Heart right ventricle (tissue), 16 donors: ENCODE measurements at regions of chr5 and their contacts with region 1.

Region 1: DNA sequence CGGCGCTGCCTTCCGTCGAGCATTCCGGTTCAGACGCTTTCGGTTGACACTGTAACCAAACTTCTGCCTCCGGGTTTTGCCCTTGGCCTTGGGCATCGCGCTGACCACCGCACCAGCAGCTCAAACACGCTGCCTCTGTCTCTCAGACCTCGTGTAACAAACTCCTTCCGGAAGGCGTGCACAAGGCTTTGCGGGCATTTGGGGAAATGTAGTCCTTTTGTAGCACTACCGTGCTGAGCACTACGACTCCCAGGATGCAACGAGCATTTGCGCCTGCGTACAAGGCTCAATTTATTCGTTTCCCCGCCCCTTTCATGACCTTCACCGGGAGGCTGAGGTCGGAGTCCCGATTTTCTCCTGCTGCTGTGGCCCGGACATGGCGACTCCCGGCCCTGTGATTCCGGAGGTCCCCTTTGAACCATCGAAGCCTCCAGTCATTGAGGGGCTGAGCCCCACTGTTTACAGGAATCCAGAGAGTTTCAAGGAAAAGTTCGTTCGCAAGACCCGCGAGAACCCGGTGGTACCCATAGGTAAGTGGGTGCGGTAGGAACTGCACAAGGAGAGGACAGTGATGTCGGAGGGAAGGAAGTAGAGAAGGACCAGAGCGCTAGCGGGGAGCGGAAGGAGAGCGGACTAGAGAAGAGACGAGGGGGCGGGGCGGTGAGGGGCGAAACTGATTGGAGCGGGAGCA is at the starts of genes HIGD2A and NOP16:
- DNase-seq: peak; percentile 99 to 100
- ATAC-seq: peak; percentile 94 to 98 (median 96)
- H3K4me3 ChIP-seq: peak within 1 kb of the TSS; percentile 52 to 99 (median 78)
- H3K27ac ChIP-seq: peak within 1 kb of the TSS; percentile 91 to 99 (median 95)
- H3K4me1 ChIP-seq: peaks cover 6 to 39% (median 27%) of the 10 kb centered on the region in 9 donors
- H3K27me3 ChIP-seq: no peaks in the 10 kb centered on the region
- CTCF ChIP-seq: no peak
- total RNA-seq, gene HIGD2A: 198 to 276 (median 228) TPM
- total RNA-seq, gene NOP16: 11.3 to 25.9 (median 18.5) TPM

Region 2: GRCh38 chr5:176537608-176538504 is 149.3 kb after region 1 on chr5:
- intact Hi-C with region 1: loop called in 1 of 10 experiments (anchors 10 kb)
- DNase-seq: peak; percentile 97 to 99
- ATAC-seq: peak; percentile 84 to 94 (median 90)
- H3K4me3 ChIP-seq: peak overlapping the region; percentile 51 to 96 (median 84)
- H3K27ac ChIP-seq: peak overlapping the region; percentile 90 to 100 (median 97)
- H3K4me1 ChIP-seq: peaks cover 19 to 81% (median 65%) of the 10 kb centered on the region in 9 donors
- H3K27me3 ChIP-seq: no peaks in the 10 kb centered on the region
- CTCF ChIP-seq: no peak

Region 3: DNA sequence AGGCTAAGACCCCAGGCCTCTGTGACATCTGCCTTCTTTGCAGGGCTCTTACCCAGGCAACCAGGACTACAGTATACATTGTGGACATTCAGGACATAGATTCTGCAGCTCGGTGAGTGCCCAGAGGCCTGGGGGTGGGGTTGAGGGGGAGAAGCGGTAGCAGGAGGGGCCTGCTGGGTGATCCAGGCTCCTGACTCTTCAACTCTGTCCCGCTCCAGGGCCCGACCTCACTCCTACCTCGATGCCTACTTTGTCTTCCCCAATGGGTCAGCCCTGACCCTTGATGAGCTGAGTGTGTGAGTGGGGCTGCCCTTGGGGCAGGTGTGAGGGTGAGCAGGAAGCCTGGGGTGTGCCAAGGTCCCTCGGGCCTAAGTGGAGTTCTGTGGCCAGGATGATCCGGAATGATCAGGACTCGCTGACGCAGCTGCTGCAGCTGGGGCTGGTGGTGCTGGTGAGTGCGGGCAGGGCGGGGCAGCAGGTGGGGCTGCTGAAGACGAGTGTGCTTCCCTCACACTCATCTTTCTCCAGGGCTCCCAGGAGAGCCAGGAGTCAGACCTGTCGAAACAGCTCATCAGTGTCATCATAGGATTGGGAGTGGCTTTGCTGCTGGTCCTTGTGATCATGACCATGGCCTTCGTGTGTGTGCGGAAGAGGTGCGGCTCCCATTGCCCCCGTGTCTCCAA is 201.6 kb after region 1 on chr5:
- intact Hi-C with region 1: no loop called
- DNase-seq: no peak
- ATAC-seq: no peak
- H3K4me3 ChIP-seq: no peak overlapping the region
- H3K27ac ChIP-seq: no peak overlapping the region
- H3K4me1 ChIP-seq: no peaks in the 10 kb centered on the region
- H3K27me3 ChIP-seq: peaks cover 0 to 7% (median 0%) of the 10 kb centered on the region in 7 donors
- CTCF ChIP-seq: no peak